Psoas muscle (tissue), 8 donors: ENCODE measurements at regions of chr12 and their contacts with region 1.

Region 1: DNA sequence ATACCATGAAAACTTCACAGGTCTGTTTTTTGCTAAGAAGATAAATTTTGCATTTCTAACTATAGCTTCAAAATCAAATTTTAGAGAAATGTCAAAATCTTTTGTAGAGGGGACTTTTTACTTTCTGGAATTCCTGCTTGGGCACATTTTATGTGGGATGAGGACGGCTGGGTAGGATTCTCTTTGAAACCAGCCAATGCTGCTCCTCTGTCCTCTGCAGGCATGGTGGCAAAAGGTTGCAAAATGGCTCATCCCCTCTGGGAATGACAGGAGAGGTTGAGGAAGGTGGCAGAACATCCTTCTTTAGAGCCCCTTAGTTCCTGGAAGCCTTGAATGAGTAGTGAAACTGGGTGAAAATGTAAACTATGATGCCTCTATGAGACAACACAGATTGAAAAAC is 6.7 kb upstream of the CCDC62 start:
- DNase-seq: no peak
- ATAC-seq: no peak
- H3K4me3 ChIP-seq: no peak overlapping the region
- H3K27ac ChIP-seq: no peak overlapping the region
- H3K4me1 ChIP-seq: no peaks in the 10 kb centered on the region
- H3K27me3 ChIP-seq: no peaks in the 10 kb centered on the region
- CTCF ChIP-seq: no peak

Region 2: GRCh38 chr12:122322501-122322900 is 445.2 kb before region 1 on chr12:
- intact Hi-C with region 1: loop called in 1 of 2 experiments (anchors 10 kb)
- DNase-seq: no peak
- ATAC-seq: no peak
- H3K4me3 ChIP-seq: no peak overlapping the region
- H3K27ac ChIP-seq: no peak overlapping the region
- H3K4me1 ChIP-seq: peaks cover 13% of the 10 kb centered on the region
- H3K27me3 ChIP-seq: no peaks in the 10 kb centered on the region
- CTCF ChIP-seq: no peak

Region 3: DNA sequence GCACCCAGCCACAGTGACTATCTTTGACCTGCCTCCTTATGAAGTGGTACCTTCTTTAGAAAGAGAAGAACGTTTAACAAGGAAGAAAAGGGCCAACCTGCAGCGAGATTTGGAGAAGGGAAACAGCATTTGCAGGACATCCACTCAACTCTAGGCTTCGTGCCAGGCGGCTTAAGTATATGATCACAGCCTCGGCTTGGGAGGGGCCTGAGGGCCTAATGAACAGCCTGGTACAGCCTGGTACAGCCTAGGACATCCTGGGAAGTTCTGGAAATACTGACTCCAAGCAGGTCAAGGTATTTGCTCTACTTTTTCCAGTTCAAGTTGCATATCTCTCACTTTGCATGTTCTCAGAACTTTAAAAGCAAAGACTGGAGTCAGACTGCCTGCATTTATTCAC is 80.6 kb before region 1 on chr12:
- intact Hi-C with region 1: no loop called
- DNase-seq: no peak
- ATAC-seq: no peak
- H3K4me3 ChIP-seq: no peak overlapping the region
- H3K27ac ChIP-seq: no peak overlapping the region
- H3K4me1 ChIP-seq: no peaks in the 10 kb centered on the region
- H3K27me3 ChIP-seq: no peaks in the 10 kb centered on the region
- CTCF ChIP-seq: no peak

Region 4: GRCh38 chr12:123934886-123935285 is 1167.2 kb after region 1 on chr12:
- intact Hi-C with region 1: no loop called
- DNase-seq: no peak
- ATAC-seq: no peak
- H3K4me3 ChIP-seq: no peak overlapping the region
- H3K27ac ChIP-seq: no peak overlapping the region
- H3K4me1 ChIP-seq: no peaks in the 10 kb centered on the region
- H3K27me3 ChIP-seq: no peaks in the 10 kb centered on the region
- CTCF ChIP-seq: no peak